SK-N-SH (cell line): ENCODE measurements at regions of chr20 and their contacts with region 1.

Region 1: GRCh38 chr20:23441850-23442313 is 2.4 kb downstream of the CSTL1 start:
- DNase-seq: peak; percentile 75
- H3K4me3 ChIP-seq: no peak overlapping the region; a peak in 1 of 4 replicates
- H3K27ac ChIP-seq: no peak overlapping the region
- H3K4me1 ChIP-seq: peaks cover 0 to 6% of the 10 kb centered on the region in 2 experiments; a peak in 2 of 4 replicates
- H3K27me3 ChIP-seq: no peaks in the 10 kb centered on the region; the same call in none of the 2 replicates
- CTCF ChIP-seq: peak; percentile 89
- EP300 ChIP-seq: no peak
- RAD21 ChIP-seq: peak; percentile 75

Region 2: GRCh38 chr20:23420943-23421931 is 20.6 kb before region 1 on chr20 and contains the start of gene NAPB:
- CTCF ChIA-PET with region 1: interaction called, 10 read pairs
- POLR2A ChIA-PET with region 1: no interaction called
- DNase-seq: peak; percentile 97
- H3K4me3 ChIP-seq: peak within 1 kb of the TSS; percentile 77 to 95
- H3K27ac ChIP-seq: peak within 1 kb of the TSS; percentile 65 to 80; a peak in 3 of 4 replicates
- H3K4me1 ChIP-seq: peaks cover 3 to 5% of the 10 kb centered on the region in 2 experiments; a peak in 3 of 4 replicates
- H3K27me3 ChIP-seq: no peaks in the 10 kb centered on the region
- CTCF ChIP-seq: peak; percentile 34
- EP300 ChIP-seq: no peak
- RAD21 ChIP-seq: no peak
- polyA plus RNA-seq, gene NAPB: 3.0 and 5.9 TPM in 2 replicates

Region 3: DNA sequence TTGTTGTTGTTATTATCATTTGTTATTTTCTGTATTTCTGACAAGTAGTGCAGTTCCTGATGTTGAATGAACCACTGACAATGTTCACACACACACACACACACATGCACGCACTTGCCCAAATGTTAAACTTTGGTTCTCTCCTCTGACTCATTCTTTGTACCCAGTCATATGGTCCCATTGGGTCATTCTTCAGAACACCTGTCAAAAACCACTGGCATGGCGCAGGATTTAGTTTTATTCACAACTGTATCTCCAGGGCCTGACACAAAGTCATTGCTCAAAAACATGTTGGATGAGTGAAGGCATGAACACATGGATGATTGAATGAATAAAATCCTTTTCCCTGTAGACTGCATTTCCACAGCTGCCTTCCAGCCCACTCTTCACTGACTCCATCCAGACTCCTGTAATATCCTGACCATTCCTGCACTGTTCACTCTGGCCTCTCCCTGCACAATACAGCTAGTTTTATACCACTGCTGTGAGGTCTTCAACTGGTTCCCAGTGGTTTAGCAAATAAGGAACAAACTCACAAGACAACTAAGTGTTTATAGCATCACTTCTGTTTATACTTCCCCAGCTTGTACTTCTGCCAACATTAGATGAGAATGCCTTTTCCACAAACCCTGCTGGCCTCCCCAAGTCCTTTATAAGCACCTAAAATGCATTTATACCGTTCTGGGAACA is 17.7 kb after region 1 on chr20:
- CTCF ChIA-PET with region 1: interaction called, 16 read pairs
- POLR2A ChIA-PET with region 1: no interaction called
- DNase-seq: no peak
- H3K4me3 ChIP-seq: no peak overlapping the region
- H3K27ac ChIP-seq: no peak overlapping the region
- H3K4me1 ChIP-seq: no peaks in the 10 kb centered on the region
- H3K27me3 ChIP-seq: peaks cover 34% of the 10 kb centered on the region
- CTCF ChIP-seq: no peak
- EP300 ChIP-seq: no peak
- RAD21 ChIP-seq: no peak

Region 4: GRCh38 chr20:23606652-23607049 is 164.8 kb after region 1 on chr20:
- CTCF ChIA-PET with region 1: interaction called, 92 read pairs
- POLR2A ChIA-PET with region 1: no interaction called
- DNase-seq: peak; percentile 81
- H3K4me3 ChIP-seq: no peak overlapping the region; a peak in 1 of 4 replicates
- H3K27ac ChIP-seq: no peak overlapping the region
- H3K4me1 ChIP-seq: no peaks in the 10 kb centered on the region
- H3K27me3 ChIP-seq: peaks cover 51% of the 10 kb centered on the region; the same call in 1 of the 2 replicates
- CTCF ChIP-seq: peak; percentile 84
- EP300 ChIP-seq: no peak
- RAD21 ChIP-seq: peak; percentile 82

Region 5: GRCh38 chr20:23691655-23692054 is 249.8 kb after region 1 on chr20:
- CTCF ChIA-PET with region 1: no interaction called
- POLR2A ChIA-PET with region 1: no interaction called
- DNase-seq: no peak
- H3K4me3 ChIP-seq: no peak overlapping the region
- H3K27ac ChIP-seq: no peak overlapping the region
- H3K4me1 ChIP-seq: 0 out of 4 replicates have a peak, but pooled peaks cover 0 to 5% of the 10 kb centered on the region in 2 experiments
- H3K27me3 ChIP-seq: no peaks in the 10 kb centered on the region; the same call in 1 of the 2 replicates
- CTCF ChIP-seq: no peak
- EP300 ChIP-seq: no peak
- RAD21 ChIP-seq: no peak